B cell (primary cell): ENCODE measurements at regions of chr19 and their contacts with region 1.

Region 1: GRCh38 chr19:13861732-13862531 is 15.0 kb upstream of the NANOS3 start:
- DNase-seq: peak; percentile 92
- ATAC-seq: peak; percentile 83
- H3K4me3 ChIP-seq: peak overlapping the region; percentile 50 to 69 (median 61)
- H3K4me3 Mint-ChIP-seq: peak overlapping the region; percentile 91
- H3K27ac ChIP-seq: peak overlapping the region; percentile 34 to 78
- H3K27ac Mint-ChIP-seq: peak overlapping the region; percentile 85
- H3K4me1 ChIP-seq: peaks cover 26 to 28% of the 10 kb centered on the region in 2 donors
- H3K4me1 Mint-ChIP-seq: peaks cover 29% of the 10 kb centered on the region
- H3K27me3 ChIP-seq: peaks cover 0 to 34% (median 17%) of the 10 kb centered on the region in 4 experiments
- H3K27me3 Mint-ChIP-seq: peaks cover 25% of the 10 kb centered on the region
- CTCF ChIP-seq: peak; percentile 97

Region 2: DNA sequence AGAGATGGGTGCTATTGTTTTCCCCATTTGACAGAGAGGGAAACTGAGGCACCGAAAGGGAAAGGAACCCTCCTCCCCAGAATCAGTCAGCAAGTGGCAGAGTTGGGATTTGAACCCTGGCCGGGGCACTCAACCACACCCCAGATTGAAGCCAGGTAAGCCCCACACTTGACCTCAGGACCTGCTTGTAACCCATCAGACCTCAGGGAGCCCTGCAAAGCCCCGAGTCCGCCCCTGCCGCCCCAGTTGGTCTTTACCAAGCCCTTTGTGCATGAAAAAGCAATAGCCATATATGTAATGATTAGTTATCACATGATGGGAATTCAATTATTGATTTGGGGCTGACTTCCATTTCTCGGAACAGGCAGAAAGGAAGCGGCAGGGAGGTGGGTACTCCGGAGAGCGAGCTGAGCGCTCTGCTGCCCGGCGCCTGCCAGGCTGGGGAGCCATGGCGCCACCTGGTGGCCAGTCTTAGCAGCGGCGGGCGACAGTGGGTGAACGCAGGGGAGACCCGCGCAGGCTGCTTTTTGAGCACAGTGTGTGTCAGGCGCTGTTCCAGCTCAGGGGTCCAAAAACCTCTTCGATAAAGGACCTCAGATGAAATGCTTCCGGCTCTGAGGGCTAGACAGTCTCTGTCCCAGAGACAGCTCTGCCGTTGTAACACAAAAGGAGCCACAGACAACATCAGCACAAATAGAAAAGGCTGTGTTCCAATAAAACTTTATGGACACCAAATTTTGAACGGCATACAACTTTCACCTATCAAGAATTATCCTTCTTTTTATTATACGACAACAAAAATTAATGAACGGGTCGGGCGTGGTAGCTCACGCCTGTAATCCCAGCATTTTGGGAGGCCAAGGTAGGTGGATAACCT is 272.7 kb before region 1 on chr19:
- CTCF ChIA-PET with region 1: interaction called, 14 read pairs
- POLR2A ChIA-PET with region 1: no interaction called
- intact Hi-C with region 1: no loop called
- DNase-seq: peak; percentile 85
- ATAC-seq: peak; percentile 99
- H3K4me3 ChIP-seq: no peak overlapping the region
- H3K4me3 Mint-ChIP-seq: no peak overlapping the region
- H3K27ac ChIP-seq: no peak overlapping the region
- H3K27ac Mint-ChIP-seq: no peak overlapping the region
- H3K4me1 ChIP-seq: peaks cover 0 to 7% of the 10 kb centered on the region in 2 donors
- H3K4me1 Mint-ChIP-seq: peaks cover 1% of the 10 kb centered on the region
- H3K27me3 ChIP-seq: peaks cover 0 to 8% (median 0%) of the 10 kb centered on the region in 4 experiments
- H3K27me3 Mint-ChIP-seq: peaks cover 25% of the 10 kb centered on the region
- CTCF ChIP-seq: peak; percentile 95

Region 3: GRCh38 chr19:13610039-13610691 is 251.8 kb before region 1 on chr19:
- CTCF ChIA-PET with region 1: interaction called, 11 read pairs
- POLR2A ChIA-PET with region 1: no interaction called
- intact Hi-C with region 1: no loop called
- DNase-seq: no peak
- ATAC-seq: no peak
- H3K4me3 ChIP-seq: no peak overlapping the region
- H3K4me3 Mint-ChIP-seq: no peak overlapping the region
- H3K27ac ChIP-seq: no peak overlapping the region
- H3K27ac Mint-ChIP-seq: no peak overlapping the region
- H3K4me1 ChIP-seq: no peaks in the 10 kb centered on the region
- H3K4me1 Mint-ChIP-seq: peaks cover 1% of the 10 kb centered on the region
- H3K27me3 ChIP-seq: peaks cover 0 to 6% (median 1%) of the 10 kb centered on the region in 4 experiments
- H3K27me3 Mint-ChIP-seq: peaks cover 26% of the 10 kb centered on the region
- CTCF ChIP-seq: no peak

Region 4: GRCh38 chr19:13748169-13748828 is 113.6 kb before region 1 on chr19:
- CTCF ChIA-PET with region 1: interaction called, 13 read pairs
- POLR2A ChIA-PET with region 1: no interaction called
- intact Hi-C with region 1: no loop called
- DNase-seq: no peak
- ATAC-seq: no peak
- H3K4me3 ChIP-seq: peak overlapping the region; percentile 76 to 97 (median 86)
- H3K4me3 Mint-ChIP-seq: peak overlapping the region; percentile 90
- H3K27ac ChIP-seq: peak overlapping the region; percentile 71 to 94
- H3K27ac Mint-ChIP-seq: peak overlapping the region; percentile 82
- H3K4me1 ChIP-seq: peaks cover 11 to 15% of the 10 kb centered on the region in 2 donors
- H3K4me1 Mint-ChIP-seq: peaks cover 28% of the 10 kb centered on the region
- H3K27me3 ChIP-seq: no peaks in the 10 kb centered on the region
- H3K27me3 Mint-ChIP-seq: no peaks in the 10 kb centered on the region
- CTCF ChIP-seq: no peak

Region 5: DNA sequence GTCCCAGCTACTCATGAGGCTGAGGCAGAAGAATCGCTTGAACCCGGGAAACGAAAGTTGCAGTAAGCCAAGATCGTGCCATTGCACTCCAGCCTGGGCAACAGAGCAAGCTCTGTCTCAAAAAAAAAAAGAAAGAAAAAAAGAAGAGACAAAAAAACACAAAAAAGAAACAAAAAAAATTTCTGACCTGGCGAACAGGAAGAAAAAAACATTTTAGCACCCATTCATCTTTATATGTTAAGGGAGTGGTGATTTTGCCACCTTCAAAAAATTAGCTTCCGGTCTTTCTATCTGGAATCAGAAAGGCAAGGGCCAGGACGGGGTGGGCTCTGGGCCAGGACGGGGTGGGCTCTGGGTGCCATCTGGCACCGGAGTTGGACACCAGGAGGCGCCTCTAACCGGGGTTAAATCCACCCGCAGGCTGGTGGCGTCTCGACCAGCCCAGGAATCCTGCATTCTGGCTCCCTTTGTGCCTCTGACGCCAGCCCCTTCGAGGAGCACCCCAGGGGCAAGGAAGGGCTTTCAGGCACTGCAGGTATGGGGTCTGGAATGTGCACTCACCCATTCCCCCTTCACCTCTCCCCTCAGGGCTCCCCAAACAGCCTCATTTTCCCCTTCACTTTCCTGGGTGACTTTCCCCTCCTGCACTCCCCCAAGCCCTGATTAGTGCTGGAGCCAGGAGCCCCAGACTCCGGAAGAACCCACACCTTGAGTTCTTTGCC is 77.0 kb before region 1 on chr19:
- CTCF ChIA-PET with region 1: interaction called, 250 read pairs
- POLR2A ChIA-PET with region 1: interaction called, 13 read pairs
- intact Hi-C with region 1: loop called (anchors 1 kb)
- DNase-seq: peak; percentile 76
- ATAC-seq: peak; percentile 71
- H3K4me3 ChIP-seq: no peak overlapping the region
- H3K4me3 Mint-ChIP-seq: peak overlapping the region; percentile 62
- H3K27ac ChIP-seq: no peak overlapping the region
- H3K27ac Mint-ChIP-seq: peak overlapping the region; percentile 42
- H3K4me1 ChIP-seq: peaks cover 33 to 53% of the 10 kb centered on the region in 2 donors
- H3K4me1 Mint-ChIP-seq: peaks cover 37% of the 10 kb centered on the region
- H3K27me3 ChIP-seq: no peaks in the 10 kb centered on the region
- H3K27me3 Mint-ChIP-seq: no peaks in the 10 kb centered on the region
- CTCF ChIP-seq: peak; percentile 78

Region 6: GRCh38 chr19:13833330-13834243 is 28.3 kb before region 1 on chr19:
- CTCF ChIA-PET with region 1: interaction called, 40 read pairs
- POLR2A ChIA-PET with region 1: interaction called, 8 read pairs
- intact Hi-C with region 1: loop called (anchors 1 kb)
- DNase-seq: peak; percentile 96
- ATAC-seq: peak; percentile 87
- H3K4me3 ChIP-seq: peak overlapping the region; percentile 28 to 77 (median 69)
- H3K4me3 Mint-ChIP-seq: peak overlapping the region; percentile 88
- H3K27ac ChIP-seq: peak overlapping the region; percentile 58 to 81
- H3K27ac Mint-ChIP-seq: peak overlapping the region; percentile 86
- H3K4me1 ChIP-seq: peaks cover 39 to 45% of the 10 kb centered on the region in 2 donors
- H3K4me1 Mint-ChIP-seq: peaks cover 38% of the 10 kb centered on the region
- H3K27me3 ChIP-seq: no peaks in the 10 kb centered on the region
- H3K27me3 Mint-ChIP-seq: no peaks in the 10 kb centered on the region
- CTCF ChIP-seq: peak; percentile 73

Region 7: DNA sequence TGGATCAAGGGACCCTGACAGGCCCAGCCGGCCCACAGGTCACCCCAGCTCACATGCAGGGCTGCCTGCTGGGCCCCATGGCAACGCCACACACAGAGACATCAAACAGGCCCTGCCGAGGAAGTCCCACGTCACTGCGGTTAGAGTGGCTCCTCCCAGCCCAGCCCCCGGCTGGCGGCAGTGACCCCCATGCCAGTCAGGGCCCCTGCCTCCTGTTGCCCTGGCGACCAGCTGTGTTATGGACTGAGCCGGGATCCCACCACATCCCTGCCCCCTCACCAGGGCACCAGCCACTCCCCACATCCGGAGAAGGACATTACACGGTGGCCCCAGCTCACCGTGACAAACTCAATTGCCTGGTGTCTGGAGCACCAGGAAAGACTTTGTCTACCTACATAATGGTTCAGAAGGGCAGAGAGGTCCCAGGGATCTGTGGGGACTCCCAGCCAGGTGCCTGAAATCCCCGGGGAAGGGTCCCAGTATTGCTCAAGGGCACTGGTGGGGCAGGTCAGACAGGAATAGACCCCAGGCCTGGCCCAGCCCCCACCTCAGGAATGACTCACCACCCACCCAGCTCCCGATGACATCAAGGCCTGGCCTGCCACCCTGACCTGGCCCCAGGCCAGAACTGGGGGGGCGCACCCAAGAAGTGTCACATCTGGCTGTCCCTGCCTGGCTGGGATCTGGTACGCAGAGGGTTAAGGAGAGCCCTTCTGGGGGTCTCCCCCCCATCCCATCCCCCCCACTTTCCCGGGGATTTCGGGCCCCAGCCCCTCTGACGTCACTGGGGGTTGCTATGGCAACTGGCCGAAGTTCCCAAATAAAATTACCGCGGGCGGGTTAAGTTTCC is 15.2 kb before region 1 on chr19:
- CTCF ChIA-PET with region 1: interaction called, 35 read pairs
- POLR2A ChIA-PET with region 1: interaction called, 11 read pairs
- intact Hi-C with region 1: loop called (anchors 1 kb)
- DNase-seq: peak; percentile 98
- ATAC-seq: peak; percentile 58
- H3K4me3 ChIP-seq: peak overlapping the region in 4 of 5 experiments; percentile 48 to 72 (median 50)
- H3K4me3 Mint-ChIP-seq: peak overlapping the region; percentile 89
- H3K27ac ChIP-seq: peak overlapping the region; percentile 91 to 98
- H3K27ac Mint-ChIP-seq: peak overlapping the region; percentile 99
- H3K4me1 ChIP-seq: peaks cover 51 to 63% of the 10 kb centered on the region in 2 donors
- H3K4me1 Mint-ChIP-seq: peaks cover 57% of the 10 kb centered on the region
- H3K27me3 ChIP-seq: peaks cover 0 to 22% (median 0%) of the 10 kb centered on the region in 4 experiments
- H3K27me3 Mint-ChIP-seq: no peaks in the 10 kb centered on the region
- CTCF ChIP-seq: no peak